GM10248 (cell line): ENCODE measurements at regions of chr16 and their contacts with region 1.

Region 1: GRCh38 chr16:19361587-19361986 is 56.1 kb upstream of the TMC5 start:
- DNase-seq: no peak
- CTCF ChIP-seq: no peak

Region 2: DNA sequence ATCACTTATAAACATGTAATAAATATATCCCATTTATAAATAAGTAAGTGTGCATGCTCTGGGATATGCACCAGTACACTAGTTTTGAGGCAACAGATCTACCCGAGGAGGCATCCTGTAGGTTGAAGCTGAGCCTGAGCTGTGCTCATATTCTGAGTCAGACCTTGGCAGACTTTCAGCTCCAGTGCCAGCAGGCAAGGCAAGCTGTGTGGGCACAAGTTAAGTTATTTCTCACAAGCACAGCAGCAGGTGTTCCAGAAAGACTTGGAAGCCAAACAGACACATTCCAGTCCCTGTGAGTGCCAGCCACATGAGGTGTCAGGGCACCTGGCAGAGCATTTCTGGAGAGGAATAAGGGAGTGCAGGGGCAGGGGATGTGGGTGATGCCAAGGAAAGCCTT is 77.4 kb before region 1 on chr16:
- CTCF ChIA-PET with region 1: no interaction called
- POLR2A ChIA-PET with region 1: no interaction called
- DNase-seq: no peak
- CTCF ChIP-seq: no peak

Region 3: DNA sequence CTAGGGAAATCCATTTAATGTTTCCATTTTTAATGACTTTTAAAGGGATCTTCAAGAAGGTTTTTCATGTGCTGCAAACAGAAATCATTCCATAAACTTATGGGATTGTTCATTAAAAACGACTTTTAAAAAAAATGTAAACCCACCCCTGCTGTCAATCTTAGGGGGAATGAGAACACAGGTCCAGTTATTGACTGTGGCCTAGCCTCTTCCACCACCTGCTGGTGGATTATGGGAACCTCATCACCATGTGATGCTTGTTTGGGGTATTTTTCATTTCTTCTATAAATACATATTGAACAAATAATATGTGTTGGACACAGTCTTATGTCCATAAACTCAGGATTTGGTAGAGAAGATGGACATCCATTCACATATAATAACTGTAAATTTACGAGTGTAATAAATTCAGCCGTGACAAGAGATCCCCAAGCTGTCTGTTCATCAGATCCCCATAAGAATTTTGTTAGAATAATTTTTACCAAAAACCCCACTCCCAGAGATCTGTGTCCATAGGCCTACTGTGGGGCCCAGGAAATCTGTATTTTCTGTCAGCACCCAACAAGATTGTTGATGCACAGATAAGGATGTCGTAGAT is 14.1 kb after region 1 on chr16:
- CTCF ChIA-PET with region 1: interaction called, 11 read pairs
- POLR2A ChIA-PET with region 1: no interaction called
- DNase-seq: peak; percentile 70
- CTCF ChIP-seq: peak; percentile 75

Region 4: DNA sequence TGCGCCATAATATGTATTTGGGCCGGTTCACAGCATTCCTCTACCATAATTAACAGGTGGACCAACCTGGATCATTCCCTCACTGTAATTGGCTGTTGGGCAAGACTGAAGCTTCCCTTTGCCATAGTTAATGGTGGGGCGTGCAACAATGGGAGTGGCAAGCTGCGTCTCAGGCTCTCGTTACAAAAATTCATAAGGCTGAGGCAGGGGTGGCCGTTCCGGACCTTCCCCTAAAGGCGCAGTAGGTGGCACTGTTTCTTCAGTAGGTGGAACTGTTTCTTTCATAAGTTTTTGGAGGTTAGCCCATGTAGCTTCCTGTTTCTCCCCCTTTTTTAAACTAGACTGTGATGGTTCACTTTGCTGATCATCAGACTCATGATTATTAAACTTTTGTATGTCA is 39.1 kb after region 1 on chr16:
- CTCF ChIA-PET with region 1: no interaction called
- POLR2A ChIA-PET with region 1: no interaction called
- DNase-seq: no peak
- CTCF ChIP-seq: peak; percentile 8

Region 5: DNA sequence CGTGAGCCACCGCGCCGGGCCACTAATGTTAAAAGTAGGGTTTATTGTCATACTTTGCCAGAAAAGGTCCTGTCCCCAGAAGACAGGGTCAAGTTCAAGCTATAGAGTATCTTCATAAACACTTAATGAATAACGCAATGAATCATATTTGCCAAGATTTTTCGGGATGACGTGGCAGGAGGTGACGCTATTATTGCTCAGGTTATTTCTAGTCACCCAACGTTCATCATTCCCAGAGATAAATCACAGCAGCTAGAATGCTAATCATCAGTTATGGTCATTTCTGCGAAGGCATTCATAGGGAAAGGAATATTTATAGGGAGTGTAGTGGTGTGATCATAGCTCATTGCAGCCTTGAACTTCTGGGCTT is 58.1 kb after region 1 on chr16:
- CTCF ChIA-PET with region 1: no interaction called
- POLR2A ChIA-PET with region 1: no interaction called
- DNase-seq: no peak
- CTCF ChIP-seq: no peak